ENCODE measurements at regions of chr3 and their contacts with region 1.

Region 1: DNA sequence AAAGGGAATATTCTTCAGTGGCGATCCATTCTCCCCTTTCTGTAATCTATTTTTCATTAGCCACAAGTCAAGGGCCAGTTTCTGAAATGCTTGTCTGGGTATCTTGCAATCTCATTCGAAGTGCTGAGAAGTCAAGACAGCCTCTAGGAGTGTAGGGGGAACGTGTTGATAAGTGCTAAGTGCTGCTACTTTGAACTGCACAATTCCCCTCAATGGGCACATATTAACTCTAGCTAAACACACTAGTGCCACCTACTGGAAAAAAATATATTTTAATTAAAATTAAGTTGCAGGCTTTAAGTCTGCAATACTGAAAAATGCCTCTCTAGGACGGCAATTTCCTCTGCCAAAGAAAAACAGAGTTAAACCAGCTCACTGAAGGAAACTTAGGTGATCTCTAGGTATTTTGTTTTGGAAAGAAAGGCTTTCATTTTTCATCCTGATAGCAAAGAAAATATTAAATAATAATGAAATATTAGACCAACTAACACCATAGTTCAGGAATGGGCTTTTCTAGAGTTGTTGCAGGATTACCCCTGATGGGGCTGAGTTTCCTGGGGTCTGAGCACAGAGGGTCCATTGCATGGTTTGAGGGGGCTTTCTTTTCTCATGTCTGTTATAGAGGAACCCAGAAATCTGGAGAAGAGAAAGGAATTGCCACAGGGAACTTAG is 181.9 kb upstream of the KBTBD8 start:
- DNase-seq: no peak
- ATAC-seq: peak; percentile 81
- H3K4me3 ChIP-seq: no peak overlapping the region
- H3K27ac ChIP-seq: no peak overlapping the region
- H3K4me1 ChIP-seq: peaks cover 0 to 2% of the 10 kb centered on the region in 2 donors
- H3K27me3 ChIP-seq: no peaks in the 10 kb centered on the region

Region 2: DNA sequence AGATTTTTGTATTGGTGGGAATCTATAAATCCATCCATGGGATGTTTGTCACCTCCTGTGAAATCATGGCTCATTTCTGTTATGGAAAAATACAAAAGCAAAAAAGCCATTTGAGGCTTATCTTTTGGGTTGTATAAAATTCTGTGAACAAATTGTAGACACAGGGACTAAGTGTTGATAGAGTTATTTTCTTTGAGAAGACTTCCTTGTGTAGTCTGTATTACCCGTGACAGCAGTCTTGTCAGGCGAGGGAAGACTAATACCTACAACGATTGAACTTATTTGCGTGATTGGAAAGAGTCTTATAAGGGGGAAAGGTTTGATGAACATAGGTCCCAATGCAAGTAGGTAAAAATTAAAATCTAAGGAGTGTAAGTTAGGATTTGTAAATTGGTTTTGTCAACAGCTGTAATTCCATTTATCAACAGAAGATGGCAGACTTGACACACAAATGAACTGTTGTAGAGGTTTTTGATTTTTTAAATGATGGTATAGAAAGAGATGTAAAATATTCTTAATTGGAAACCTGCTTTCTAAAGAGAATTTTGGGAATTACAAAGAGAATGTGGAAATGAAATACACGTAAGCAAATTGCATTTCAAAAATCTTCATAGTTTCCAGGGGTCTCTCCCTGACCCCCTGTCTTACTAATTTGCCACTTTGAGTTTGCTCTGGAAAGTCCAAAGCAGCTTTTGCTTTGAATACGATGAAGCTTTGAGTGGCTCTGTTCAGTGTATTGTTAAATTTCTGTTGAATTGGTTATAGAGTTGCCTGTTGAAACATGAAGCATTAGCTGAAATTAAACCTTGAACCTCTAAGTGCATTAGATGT is 562.2 kb before region 1 on chr3:
- intact Hi-C with region 1: loop called (anchors 2 to 5 kb)
- DNase-seq: no peak
- ATAC-seq: no peak
- H3K4me3 ChIP-seq: no peak overlapping the region
- H3K27ac ChIP-seq: no peak overlapping the region
- H3K4me1 ChIP-seq: no peaks in the 10 kb centered on the region
- H3K27me3 ChIP-seq: no peaks in the 10 kb centered on the region

Region 3: GRCh38 chr3:66276705-66277274 is 539.4 kb before region 1 on chr3:
- intact Hi-C with region 1: loop called (anchors 5 kb)
- DNase-seq: no peak
- ATAC-seq: no peak
- H3K4me3 ChIP-seq: no peak overlapping the region
- H3K27ac ChIP-seq: no peak overlapping the region
- H3K4me1 ChIP-seq: no peaks in the 10 kb centered on the region
- H3K27me3 ChIP-seq: no peaks in the 10 kb centered on the region

Region 4: GRCh38 chr3:66500576-66501482 is 315.4 kb before region 1 on chr3 and contains the start of gene LRIG1:
- intact Hi-C with region 1: loop called (anchors 5 to 10 kb)
- DNase-seq: peak; percentile 99 to 100
- ATAC-seq: peak; percentile 97
- H3K4me3 ChIP-seq: peak within 1 kb of the TSS; percentile 68 to 82
- H3K27ac ChIP-seq: peak within 1 kb of the TSS; percentile 84 to 87
- H3K4me1 ChIP-seq: peaks cover 0 to under 1% of the 10 kb centered on the region in 2 donors
- H3K27me3 ChIP-seq: no peaks in the 10 kb centered on the region
- total RNA-seq, gene LRIG1: 75.7 to 115 TPM

Region 5: GRCh38 chr3:66572938-66573710 is 243.1 kb before region 1 on chr3:
- intact Hi-C with region 1: no loop called
- DNase-seq: peak in 1 of 2 donors; percentile 72
- ATAC-seq: no peak
- H3K4me3 ChIP-seq: no peak overlapping the region
- H3K27ac ChIP-seq: no peak overlapping the region
- H3K4me1 ChIP-seq: no peaks in the 10 kb centered on the region
- H3K27me3 ChIP-seq: no peaks in the 10 kb centered on the region

Region 6: DNA sequence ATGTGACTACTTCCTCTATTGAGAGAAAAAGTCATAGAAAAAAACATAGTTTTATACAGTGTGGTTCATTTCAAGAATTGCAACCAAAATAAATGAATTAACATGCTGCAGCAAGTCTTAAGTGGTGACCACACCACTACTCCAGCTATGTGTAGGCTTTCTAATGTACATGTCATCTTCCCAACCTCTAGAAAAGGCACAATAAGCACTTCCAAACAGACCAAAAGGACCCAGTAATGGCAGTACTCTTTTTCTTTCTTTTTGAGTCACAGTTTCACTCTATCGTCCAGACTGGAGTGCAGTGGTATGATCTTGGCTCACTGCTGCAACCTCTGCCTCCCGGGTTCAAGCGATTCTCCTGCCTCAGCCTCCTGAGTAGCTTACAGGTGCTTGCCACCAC is 37.4 kb before region 1 on chr3:
- intact Hi-C with region 1: no loop called
- DNase-seq: no peak
- ATAC-seq: no peak
- H3K4me3 ChIP-seq: no peak overlapping the region
- H3K27ac ChIP-seq: no peak overlapping the region
- H3K4me1 ChIP-seq: no peaks in the 10 kb centered on the region
- H3K27me3 ChIP-seq: no peaks in the 10 kb centered on the region

Region 7: DNA sequence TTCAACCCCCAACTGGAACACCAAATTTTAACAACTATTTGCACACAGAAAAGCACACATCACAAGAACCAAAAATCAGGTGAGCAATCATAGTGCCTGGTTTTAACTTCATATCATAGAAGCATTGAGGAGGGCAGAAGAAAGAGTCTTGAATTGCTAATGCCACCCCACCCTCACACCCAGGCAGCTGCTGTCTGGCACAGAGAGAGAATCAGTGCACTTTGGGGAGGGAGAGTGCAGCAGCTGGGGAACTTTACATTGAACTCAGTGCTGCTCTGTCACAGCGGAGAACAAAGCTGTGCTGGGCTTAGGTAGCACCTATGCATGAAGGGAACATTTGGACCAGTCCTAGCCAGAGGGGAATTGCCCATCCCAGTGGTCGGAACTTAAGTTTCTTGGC is 105.8 kb after region 1 on chr3:
- intact Hi-C with region 1: no loop called
- DNase-seq: no peak
- ATAC-seq: no peak
- H3K4me3 ChIP-seq: no peak overlapping the region
- H3K27ac ChIP-seq: no peak overlapping the region
- H3K4me1 ChIP-seq: no peaks in the 10 kb centered on the region
- H3K27me3 ChIP-seq: no peaks in the 10 kb centered on the region